Panc1 (cell line): ENCODE measurements at regions of chr14 and their contacts with region 1.

Region 1: DNA sequence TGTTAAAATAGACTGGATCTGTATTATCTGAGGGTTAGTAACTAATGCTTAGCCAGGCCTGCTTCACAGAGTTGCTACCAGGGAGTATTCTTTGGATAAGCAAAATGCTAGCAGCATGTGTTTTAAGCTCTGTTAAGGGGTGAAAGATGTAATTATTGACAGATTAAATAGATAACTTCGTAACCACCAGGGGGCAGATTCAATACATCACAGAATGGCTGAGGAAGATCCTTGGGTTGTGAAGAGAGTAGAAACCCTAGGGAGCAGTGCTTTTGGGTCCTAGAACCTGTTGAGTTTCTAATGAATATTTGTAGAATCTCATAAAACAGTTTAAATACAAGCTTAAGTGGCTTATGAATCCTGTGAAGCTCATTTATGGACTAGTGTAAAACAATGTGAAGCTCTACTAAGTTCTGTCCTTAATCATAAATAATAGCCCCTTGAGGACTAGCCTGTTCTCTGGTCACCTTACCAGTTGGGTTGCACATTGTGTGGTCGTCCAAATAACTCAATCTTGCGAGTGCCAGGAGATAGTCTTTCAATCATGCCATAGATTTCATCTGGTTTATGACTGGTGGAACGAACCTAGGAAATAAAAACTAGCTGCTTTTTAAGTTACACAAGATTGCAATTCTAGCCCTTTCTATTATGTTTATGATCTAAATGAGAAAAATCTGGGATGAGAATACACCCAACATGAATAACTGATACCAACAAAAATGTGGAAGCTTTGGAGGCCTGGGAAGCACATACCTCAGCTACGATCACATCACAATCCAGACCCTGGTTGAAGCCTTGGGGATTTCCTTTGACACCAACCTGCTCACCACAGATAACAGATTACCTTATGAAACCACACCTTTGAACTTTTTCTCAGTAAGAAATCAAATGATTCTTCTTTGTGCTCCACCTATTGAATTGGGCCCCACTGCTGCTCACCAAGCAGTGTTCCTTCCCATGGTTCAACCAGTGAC is 12.3 kb downstream of the METTL3 start:
- DNase-seq: no peak
- ATAC-seq: peak; percentile 61; the same call in 1 of the 2 replicates
- H3K4me3 ChIP-seq: no peak overlapping the region
- H3K27ac ChIP-seq: no peak overlapping the region
- H3K4me1 ChIP-seq: no peaks in the 10 kb centered on the region
- H3K27me3 ChIP-seq: no peaks in the 10 kb centered on the region
- CTCF ChIP-seq: peak; percentile 25; the same call in 1 of the 2 replicates

Region 2: GRCh38 chr14:21106508-21107359 is 392.1 kb before region 1 on chr14:
- CTCF ChIA-PET with region 1: no interaction called
- POLR2A ChIA-PET with region 1: no interaction called
- in situ Hi-C with region 1: no loop called
- intact Hi-C with region 1: no loop called
- DNase-seq: peak; percentile 61
- ATAC-seq: peak; percentile 55
- H3K4me3 ChIP-seq: peak overlapping the region in 1 of 2 experiments; percentile 6; a peak in 2 of 4 replicates
- H3K27ac ChIP-seq: no peak overlapping the region
- H3K4me1 ChIP-seq: peaks cover 13% of the 10 kb centered on the region
- H3K27me3 ChIP-seq: no peaks in the 10 kb centered on the region
- CTCF ChIP-seq: peak; percentile 92

Region 3: GRCh38 chr14:21486640-21487087 is 12.2 kb before region 1 on chr14:
- CTCF ChIA-PET with region 1: no interaction called
- POLR2A ChIA-PET with region 1: interaction called, 12 read pairs
- in situ Hi-C with region 1: no loop called
- intact Hi-C with region 1: no loop called
- DNase-seq: no peak
- ATAC-seq: no peak
- H3K4me3 ChIP-seq: no peak overlapping the region
- H3K27ac ChIP-seq: no peak overlapping the region
- H3K4me1 ChIP-seq: no peaks in the 10 kb centered on the region
- H3K27me3 ChIP-seq: no peaks in the 10 kb centered on the region
- CTCF ChIP-seq: no peak

Region 4: DNA sequence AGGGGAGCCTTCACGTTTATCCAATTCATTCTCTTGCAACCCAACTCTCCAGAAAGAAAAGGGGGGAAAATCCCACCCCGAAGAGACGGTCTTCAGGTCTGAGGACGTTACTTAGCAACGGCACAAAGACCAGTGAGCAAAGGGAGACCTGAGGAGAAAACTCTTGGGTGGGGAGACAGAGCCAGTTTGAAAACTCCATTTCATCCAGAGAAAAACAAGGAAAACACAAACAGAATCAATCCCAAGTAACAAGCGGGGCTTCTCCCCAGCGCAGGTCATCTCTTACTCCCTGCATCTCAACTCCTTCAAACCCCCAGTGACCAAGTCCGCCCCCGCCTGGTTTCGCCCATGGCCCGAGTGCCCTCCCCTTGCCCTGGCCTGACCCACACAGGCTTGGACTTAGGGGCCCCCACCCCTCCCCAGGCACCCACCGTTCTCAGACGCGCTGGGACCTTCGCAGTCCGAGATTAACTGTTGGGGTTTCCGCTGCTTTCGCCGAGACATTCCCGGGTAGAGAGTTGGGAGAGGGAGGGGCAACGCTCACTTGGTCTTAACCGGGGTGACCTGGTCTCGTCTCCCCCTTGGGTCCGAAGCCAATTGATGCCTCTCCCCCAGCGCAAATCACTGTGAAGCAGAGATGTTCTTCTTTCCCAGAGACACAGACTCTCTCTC is 37.7 kb after region 1 on chr14:
- CTCF ChIA-PET with region 1: no interaction called
- POLR2A ChIA-PET with region 1: no interaction called
- in situ Hi-C with region 1: no loop called
- intact Hi-C with region 1: no loop called
- DNase-seq: no peak
- ATAC-seq: 0 out of 2 replicates have a peak, but pooled peaks have one; percentile 42
- H3K4me3 ChIP-seq: peak overlapping the region; percentile 24 to 36
- H3K27ac ChIP-seq: no peak overlapping the region
- H3K4me1 ChIP-seq: peaks cover 3% of the 10 kb centered on the region; the same call in 1 of the 2 replicates
- H3K27me3 ChIP-seq: peaks cover 4% of the 10 kb centered on the region
- CTCF ChIP-seq: no peak

Region 5: GRCh38 chr14:22200977-22201605 is 702.3 kb after region 1 on chr14:
- CTCF ChIA-PET with region 1: no interaction called
- POLR2A ChIA-PET with region 1: no interaction called
- in situ Hi-C with region 1: no loop called
- intact Hi-C with region 1: no loop called
- DNase-seq: peak; percentile 27
- ATAC-seq: peak; percentile 78; the same call in 1 of the 2 replicates
- H3K4me3 ChIP-seq: no peak overlapping the region
- H3K27ac ChIP-seq: no peak overlapping the region
- H3K4me1 ChIP-seq: no peaks in the 10 kb centered on the region
- H3K27me3 ChIP-seq: no peaks in the 10 kb centered on the region
- CTCF ChIP-seq: peak; percentile 66; the same call in 1 of the 2 replicates